T-cell (primary cell): ENCODE measurements at regions of chr19 and their contacts with region 1.

Region 1: DNA sequence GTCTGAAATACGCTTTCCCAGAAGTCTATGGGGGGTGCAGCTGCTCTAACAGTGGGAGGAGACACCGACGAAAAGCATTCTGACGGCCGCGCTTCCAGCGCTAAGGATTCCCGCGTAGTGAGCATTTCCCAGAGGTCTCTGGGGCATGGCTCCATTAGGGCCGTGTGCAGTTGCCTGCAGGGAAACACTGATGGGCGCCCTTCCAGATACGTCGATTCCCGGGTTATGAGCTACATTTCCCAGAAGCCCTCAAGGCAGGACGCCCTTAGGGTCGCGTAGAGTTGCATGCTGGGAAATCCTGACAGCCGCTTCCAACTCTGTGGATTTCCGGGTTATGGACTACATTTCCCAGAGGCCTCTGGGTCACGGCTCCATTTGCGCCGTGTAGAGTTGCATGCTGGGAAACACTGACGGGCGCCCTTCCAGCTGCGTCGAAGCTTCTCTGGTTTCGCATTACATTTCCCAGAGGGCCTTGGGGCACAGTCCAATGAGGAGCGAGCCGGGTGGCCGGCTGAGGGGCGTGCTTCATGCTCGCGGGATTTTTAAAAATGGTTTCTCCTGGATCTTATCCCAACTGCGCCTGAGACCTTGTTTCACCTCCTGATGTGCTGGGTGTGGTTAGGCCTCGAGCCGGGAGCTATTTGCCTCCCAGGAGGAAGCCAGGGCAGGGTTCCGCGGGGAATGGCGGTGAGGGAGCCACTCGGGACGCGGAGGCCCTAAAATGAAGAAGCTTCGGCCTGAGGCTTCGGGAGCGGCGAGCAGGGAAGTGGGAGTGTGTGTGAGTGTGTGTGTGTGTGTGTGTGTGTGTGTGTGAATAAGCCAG is 17.2 kb upstream of the ZNF331 start:
- DNase-seq: peak; percentile 75 to 95 (median 87)
- ATAC-seq: peak; percentile 98 to 100 (median 99)
- H3K4me3 ChIP-seq: peak overlapping the region; percentile 68 to 73
- H3K4me3 Mint-ChIP-seq: peak overlapping the region; percentile 92 to 99 (median 98)
- H3K27ac ChIP-seq: peak overlapping the region; percentile 79
- H3K27ac Mint-ChIP-seq: peak overlapping the region; percentile 76 to 93
- H3K4me1 ChIP-seq: peaks cover 2 to 19% of the 10 kb centered on the region in 2 experiments
- H3K4me1 Mint-ChIP-seq: peaks cover 14 to 22% (median 20%) of the 10 kb centered on the region in 3 donors
- H3K27me3 ChIP-seq: no peaks in the 10 kb centered on the region
- H3K27me3 Mint-ChIP-seq: no peaks in the 10 kb centered on the region

Region 2: DNA sequence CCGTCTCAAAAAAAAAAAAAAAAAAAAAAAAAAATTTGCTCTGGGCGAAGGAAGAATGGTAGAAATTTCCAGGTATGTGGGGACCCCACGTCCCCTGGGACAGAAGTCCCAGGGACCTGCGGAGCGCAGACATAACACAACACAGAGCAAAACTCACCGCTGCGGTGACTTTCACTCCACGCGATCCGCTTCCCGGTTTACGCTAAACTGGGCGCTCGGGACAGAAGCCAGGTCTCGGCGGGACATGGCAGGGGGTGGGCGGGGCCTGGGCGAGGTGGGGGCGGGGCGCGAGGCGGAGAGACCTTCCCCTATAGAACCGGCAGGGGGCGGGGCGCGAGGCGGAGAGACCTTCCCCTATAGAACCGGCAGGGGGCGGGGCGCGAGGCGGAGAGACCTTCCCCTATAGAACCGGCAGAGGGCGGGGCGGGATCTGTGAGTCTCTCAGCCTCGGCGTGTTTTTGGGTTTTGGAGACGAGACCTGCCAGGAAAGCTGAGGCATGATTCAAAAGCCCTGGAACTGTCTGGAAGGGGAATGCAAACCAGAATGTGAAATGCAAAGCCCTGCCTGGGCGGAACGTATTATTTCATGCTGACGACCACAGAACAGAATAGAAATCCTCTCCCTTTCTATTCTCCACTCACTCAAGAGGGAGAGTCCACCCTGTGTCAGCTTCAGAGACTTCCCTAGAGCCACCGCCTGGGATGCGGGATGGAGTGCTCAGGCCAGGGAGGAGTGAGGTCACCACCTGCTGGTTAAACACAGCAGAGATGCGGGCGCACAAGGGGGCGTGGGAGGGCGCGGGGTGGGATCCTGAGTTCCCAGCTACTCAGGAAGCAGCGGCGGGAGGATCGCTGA is 527.2 kb before region 1 on chr19:
- CTCF ChIA-PET with region 1: interaction called in 1 of 2 experiments, 11 read pairs
- POLR2A ChIA-PET with region 1: no interaction called
- DNase-seq: peak; percentile 57 to 86 (median 76)
- ATAC-seq: peak; percentile 91 to 96 (median 94)
- H3K4me3 ChIP-seq: peak overlapping the region; percentile 53 to 74
- H3K4me3 Mint-ChIP-seq: peak overlapping the region; percentile 74 to 81 (median 81)
- H3K27ac ChIP-seq: no peak overlapping the region
- H3K27ac Mint-ChIP-seq: no peak overlapping the region
- H3K4me1 ChIP-seq: peaks cover 0 to 16% of the 10 kb centered on the region in 2 experiments
- H3K4me1 Mint-ChIP-seq: peaks cover 12 to 20% (median 15%) of the 10 kb centered on the region in 3 donors
- H3K27me3 ChIP-seq: peaks cover 0 to 18% of the 10 kb centered on the region in 2 experiments
- H3K27me3 Mint-ChIP-seq: peaks cover 5% of the 10 kb centered on the region in 2 donors